ENCODE measurements at regions of chr2 and their contacts with region 1.

Region 1: DNA sequence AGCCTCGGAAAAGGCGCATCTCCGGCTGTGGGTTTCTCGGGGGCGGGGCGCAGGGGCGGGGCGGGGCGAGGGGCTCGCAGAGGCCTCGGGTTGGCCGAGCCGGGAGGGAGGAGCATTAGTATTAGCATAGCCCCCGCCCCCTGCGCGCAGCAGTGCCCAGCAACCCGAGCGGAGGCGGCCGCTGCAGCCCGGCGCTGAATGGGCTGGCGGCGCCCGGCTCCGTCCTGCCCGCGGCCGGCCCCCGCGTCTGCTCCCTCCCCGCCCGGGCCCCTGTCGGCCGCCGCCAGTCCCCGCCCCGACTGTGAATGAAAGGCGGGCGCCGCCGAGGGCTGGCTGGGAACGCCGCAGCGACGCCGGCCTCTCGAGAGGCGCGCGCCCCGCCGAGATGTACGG is at the start of gene EFR3B:
- DNase-seq: peak; percentile 97
- total RNA-seq, gene EFR3B: 8.9 TPM

Region 2: DNA sequence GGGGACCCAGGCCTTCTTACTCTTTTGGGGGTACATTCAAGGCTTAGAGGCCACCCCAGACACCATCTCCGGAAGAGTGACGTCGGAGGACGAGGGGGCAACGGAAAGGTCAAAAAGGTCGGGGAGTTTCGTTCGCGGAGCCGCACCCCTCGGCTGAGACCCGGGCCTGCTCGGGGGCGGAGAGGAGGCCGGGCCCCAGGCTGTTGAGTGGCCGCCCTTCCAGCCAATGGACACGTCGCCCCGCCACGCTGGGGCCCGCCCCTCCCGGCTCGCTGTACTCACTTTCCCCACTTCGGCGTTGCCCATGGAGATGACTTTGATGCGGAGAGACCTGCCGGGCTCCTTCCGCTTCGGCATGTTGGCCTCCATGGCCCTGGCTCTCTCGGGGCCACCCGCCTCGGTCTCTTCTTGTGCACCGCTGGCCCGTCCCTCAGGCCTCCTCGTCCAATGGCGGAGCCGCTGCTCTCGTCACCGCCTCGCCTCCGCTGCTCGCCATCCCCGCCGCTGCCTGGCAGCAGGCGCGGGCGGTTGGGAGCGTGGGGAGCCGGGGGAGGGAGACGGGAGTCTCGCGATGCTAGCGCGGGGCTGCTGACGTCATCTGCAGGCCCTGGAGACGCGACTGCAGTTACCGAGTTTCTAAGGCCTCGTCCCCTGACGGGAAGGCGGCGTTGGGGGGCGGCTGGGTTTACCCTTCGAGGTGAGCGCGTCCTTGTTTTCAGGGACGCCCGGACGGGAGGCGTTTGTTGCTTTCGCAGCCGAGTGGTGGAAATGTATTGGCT is 70.2 kb before region 1 on chr2 and contains the start of gene DNAJC27:
- intact Hi-C with region 1: loop called (anchors 2 kb)
- DNase-seq: peak; percentile 100
- total RNA-seq, gene DNAJC27: 11.2 TPM

Region 3: DNA sequence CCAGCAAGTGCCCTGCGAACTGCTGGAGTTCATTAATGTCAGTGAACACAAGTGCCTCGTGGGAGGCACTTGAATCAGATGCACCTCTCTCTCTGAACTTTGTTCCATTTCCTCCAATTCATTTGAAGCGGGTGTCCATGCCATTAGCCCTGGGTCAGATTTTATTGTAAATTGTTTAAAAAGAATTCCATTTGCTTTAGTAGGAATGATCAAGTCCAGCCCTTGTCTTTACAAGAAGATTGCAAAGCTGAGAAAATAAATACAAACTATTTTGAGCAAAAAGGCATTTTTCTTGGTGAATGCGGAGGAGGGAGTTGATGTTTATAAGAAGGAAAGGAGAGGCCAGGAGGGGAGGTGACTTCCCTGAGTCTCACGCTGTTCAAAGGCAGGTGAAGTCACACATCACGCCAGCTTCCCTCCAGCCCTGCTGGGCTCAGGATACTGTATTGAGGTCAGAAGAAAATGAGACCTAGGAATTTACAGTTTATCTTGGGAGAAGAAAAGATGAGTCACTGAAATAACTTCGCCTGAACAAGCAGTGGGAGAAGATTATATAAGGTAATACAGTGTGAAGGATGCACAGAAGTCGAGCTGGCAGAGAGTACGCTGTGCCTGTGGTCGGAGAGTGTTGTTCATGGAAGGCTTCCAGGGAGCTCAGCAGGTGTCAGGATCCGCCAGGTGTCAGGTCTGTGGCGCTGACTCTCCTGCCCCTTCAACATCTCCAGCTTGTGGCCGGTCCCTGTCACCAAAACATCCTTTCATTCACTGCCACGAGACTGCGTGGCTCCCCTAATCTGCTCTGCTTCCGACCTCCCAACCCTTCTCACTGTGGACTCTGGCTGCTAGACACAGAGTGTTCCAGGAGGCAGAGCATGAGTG is 36.5 kb after region 1 on chr2:
- intact Hi-C with region 1: loop called (anchors 5 kb)
- DNase-seq: no peak